ENCODE measurements at regions of chr12 and their contacts with region 1.

Region 1: DNA sequence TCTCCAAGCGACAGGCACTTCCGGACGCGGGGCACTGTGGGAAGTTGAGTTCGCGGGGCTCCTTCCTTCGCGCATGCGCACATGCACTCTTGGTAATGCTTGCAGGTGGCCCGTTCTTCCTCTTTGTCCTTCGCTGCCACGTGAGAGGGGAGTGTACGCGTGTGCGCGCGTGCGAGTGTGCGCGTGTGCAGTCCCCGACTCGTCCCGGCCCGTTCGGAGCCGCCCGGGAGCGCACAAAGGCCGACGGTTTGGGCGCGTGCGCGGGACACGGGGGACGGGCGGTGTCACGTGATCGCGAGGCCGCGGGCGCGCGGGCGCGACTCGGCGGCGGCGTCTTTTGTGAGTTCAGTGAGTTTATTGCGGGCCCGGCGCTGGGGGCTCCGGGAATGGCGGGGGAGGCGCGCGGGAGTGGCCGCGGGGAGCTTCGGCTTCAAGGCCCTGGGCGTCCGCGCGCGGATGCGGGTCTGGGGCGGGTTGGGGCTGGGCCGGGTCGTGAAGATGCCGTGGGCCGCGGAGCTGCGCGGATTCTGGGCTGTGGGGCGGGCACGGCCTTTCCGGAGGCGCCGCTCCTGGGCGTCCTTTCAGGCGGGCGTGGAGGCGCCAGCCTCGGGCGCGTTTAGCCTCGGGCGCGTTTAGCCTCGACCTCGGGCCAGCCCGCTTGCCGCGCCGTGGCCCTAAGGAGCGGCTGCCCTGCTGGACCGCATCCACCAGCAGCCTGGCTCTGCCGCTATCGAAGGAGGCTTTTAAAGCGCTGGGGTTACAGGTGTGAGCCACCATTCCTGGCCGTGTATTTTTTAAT is at the start of gene ZNF84:
- DNase-seq: peak; percentile 98
- H3K4me3 Mint-ChIP-seq: peak within 1 kb of the TSS; percentile 93
- H3K27ac Mint-ChIP-seq: peak within 1 kb of the TSS; percentile 93
- H3K4me1 Mint-ChIP-seq: peaks cover 7% of the 10 kb centered on the region
- H3K27me3 Mint-ChIP-seq: no peaks in the 10 kb centered on the region
- total RNA-seq, gene ZNF84: 10.1 to 11.8 TPM

Region 2: DNA sequence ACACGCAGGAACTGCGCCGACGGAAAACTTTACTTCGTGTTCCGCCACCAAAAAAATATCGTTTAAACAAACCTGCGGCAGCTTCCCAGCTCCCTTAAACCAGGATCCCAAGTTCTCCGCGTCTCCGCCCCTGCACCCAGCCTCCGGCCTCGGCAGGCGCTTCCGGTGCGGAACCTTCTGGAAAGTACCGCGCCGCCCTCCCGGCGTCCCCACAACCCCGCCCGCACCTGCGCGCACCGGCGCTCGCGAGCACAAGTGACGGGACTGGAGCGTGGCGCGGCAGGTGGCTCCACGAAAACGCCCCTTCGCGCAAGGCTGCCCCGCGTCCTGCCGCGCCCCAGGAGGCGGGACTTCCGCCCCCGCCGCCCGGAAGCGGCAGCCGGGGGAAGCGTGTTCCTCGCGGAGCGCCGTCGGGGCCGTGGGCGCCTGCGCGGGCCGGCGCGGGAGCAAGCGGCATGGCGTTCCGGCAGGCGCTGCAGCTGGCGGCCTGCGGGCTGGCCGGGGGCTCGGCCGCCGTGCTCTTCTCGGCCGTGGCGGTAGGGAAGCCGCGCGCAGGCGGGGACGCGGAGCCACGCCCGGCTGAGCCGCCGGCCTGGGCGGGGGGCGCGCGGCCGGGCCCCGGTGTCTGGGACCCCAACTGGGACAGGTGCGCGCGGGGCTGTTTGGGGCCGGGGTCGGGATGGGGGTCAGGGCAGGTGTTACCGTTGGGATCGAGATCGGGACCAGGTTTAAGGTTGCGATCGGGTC is 326.8 kb before region 1 on chr12 and contains the start of gene PGAM5:
- CTCF ChIA-PET with region 1: no interaction called
- POLR2A ChIA-PET with region 1: no interaction called
- intact Hi-C with region 1: loop called (anchors 2 kb)
- DNase-seq: peak; percentile 93
- H3K4me3 Mint-ChIP-seq: peak within 1 kb of the TSS; percentile 83
- H3K27ac Mint-ChIP-seq: peak within 1 kb of the TSS; percentile 86
- H3K4me1 Mint-ChIP-seq: peaks cover 23% of the 10 kb centered on the region
- H3K27me3 Mint-ChIP-seq: no peaks in the 10 kb centered on the region
- total RNA-seq, gene PGAM5: 54.3 to 56.4 TPM

Region 3: GRCh38 chr12:132828706-132829534 is 208.5 kb before region 1 on chr12 and contains the start of gene GOLGA3:
- CTCF ChIA-PET with region 1: no interaction called
- POLR2A ChIA-PET with region 1: no interaction called
- intact Hi-C with region 1: loop called (anchors 1 kb)
- DNase-seq: peak; percentile 96
- H3K4me3 Mint-ChIP-seq: peak within 1 kb of the TSS; percentile 96
- H3K27ac Mint-ChIP-seq: peak within 1 kb of the TSS; percentile 100
- H3K4me1 Mint-ChIP-seq: peaks cover 50% of the 10 kb centered on the region
- H3K27me3 Mint-ChIP-seq: no peaks in the 10 kb centered on the region
- total RNA-seq, gene GOLGA3: 41.7 to 44.2 TPM

Region 4: DNA sequence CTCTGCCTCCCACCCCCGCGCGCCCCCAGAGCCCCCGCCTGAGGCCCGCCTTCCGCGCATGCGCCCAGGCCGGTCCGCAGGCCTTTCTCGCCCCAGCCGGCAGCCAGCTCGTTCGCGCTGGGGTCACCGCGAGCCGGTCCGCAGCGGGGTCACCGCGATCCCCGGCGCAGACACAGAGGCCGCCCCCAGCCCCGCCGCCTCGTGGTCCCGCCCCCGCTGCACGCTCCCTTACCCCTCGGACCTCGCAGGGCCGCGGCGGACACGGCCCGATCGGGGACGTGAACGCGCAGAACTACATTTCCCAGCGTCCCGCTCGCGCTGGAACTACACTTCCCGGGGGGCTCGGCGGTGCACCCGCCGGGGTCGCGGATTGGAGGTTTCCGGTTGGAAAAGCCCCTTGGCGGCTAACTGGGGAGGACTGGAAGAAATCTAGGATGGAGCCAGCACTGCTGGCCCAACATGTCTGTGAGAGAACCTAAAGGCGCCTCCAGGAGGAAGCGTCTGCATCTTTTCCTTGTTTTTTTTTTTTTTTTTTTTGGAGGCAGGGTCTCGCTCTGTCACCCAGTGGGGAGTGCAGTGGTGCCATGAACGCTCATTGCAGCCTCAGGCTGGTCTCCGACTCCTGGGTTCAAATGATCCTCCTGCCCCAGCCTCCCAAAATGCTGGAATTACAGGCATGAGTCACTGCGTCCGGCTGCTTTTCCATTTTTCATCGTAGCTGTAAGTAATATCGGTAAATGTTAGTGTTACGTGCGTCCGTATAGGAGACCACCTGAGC is 81.2 kb before region 1 on chr12 and contains the start of gene ZNF605:
- CTCF ChIA-PET with region 1: no interaction called
- POLR2A ChIA-PET with region 1: no interaction called
- intact Hi-C with region 1: loop called (anchors 1 kb)
- DNase-seq: peak; percentile 93
- H3K4me3 Mint-ChIP-seq: peak within 1 kb of the TSS; percentile 88
- H3K27ac Mint-ChIP-seq: peak within 1 kb of the TSS; percentile 89
- H3K4me1 Mint-ChIP-seq: peaks cover 31% of the 10 kb centered on the region
- H3K27me3 Mint-ChIP-seq: no peaks in the 10 kb centered on the region
- total RNA-seq, gene ZNF605: 4.6 to 5.3 TPM

Region 5: DNA sequence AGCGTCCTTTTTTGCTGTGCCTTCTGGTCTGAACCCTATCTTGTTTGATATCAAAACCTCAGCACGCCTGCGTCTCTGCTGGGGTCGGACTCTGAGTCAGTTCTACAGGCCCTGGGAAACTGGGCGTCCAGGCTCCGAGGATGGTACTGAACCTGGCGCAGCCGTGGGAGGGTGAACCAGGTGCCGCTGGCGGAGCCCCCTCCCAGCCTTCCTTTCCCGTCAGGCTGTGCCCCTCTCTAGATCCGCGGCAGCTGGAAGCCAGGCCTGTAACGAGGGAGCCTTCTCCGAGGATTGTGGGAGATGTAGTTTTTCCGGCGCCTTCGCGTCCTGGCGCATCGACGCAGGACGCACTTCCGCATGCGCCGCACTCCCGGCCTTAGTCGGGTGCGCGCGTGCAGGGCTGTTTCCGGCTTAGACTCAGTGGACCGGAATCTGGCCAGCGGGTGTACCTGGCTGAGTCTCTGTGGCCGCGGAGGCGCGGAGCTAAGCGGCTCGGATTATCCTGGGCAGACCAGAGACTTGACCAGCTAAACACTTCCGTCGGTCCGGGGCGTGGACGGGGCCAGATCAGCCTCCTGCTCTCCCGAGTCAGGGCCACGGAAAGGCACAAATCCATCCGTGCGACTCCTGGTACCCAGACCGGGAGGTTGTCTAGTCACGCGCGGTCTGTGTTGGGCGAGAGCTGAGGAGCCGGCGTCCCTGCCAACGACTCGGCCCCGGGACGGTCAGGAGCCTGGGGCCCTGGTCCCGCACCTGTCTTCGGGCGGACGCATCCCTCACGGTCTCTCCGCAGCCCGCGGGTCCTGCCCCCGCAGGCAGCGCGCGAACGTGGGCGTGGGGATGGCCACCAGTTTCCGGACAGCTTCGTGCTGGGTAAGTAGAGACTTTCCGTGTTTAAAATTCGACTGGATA is 51.1 kb before region 1 on chr12 and contains the start of gene ZNF26:
- CTCF ChIA-PET with region 1: no interaction called
- POLR2A ChIA-PET with region 1: interaction called, 4 read pairs
- intact Hi-C with region 1: loop called (anchors 1 kb)
- DNase-seq: peak; percentile 92
- H3K4me3 Mint-ChIP-seq: peak within 1 kb of the TSS; percentile 89
- H3K27ac Mint-ChIP-seq: peak within 1 kb of the TSS; percentile 94
- H3K4me1 Mint-ChIP-seq: peaks cover 27% of the 10 kb centered on the region
- H3K27me3 Mint-ChIP-seq: no peaks in the 10 kb centered on the region
- total RNA-seq, gene ZNF26: 10.2 to 10.8 TPM

Region 6: GRCh38 chr12:133130038-133130807 is 92.8 kb after region 1 on chr12 and contains the starts of genes ZNF10 and ZNF891:
- CTCF ChIA-PET with region 1: no interaction called
- POLR2A ChIA-PET with region 1: interaction called, 4 read pairs
- intact Hi-C with region 1: loop called (anchors 1 kb)
- DNase-seq: peak; percentile 98
- H3K4me3 Mint-ChIP-seq: peak within 1 kb of the TSS; percentile 97
- H3K27ac Mint-ChIP-seq: peak within 1 kb of the TSS; percentile 96
- H3K4me1 Mint-ChIP-seq: peaks cover 14% of the 10 kb centered on the region
- H3K27me3 Mint-ChIP-seq: no peaks in the 10 kb centered on the region
- total RNA-seq, gene ZNF10: 3.7 to 4.1 TPM
- total RNA-seq, gene ZNF891: 1.1 to 1.2 TPM

Region 7: DNA sequence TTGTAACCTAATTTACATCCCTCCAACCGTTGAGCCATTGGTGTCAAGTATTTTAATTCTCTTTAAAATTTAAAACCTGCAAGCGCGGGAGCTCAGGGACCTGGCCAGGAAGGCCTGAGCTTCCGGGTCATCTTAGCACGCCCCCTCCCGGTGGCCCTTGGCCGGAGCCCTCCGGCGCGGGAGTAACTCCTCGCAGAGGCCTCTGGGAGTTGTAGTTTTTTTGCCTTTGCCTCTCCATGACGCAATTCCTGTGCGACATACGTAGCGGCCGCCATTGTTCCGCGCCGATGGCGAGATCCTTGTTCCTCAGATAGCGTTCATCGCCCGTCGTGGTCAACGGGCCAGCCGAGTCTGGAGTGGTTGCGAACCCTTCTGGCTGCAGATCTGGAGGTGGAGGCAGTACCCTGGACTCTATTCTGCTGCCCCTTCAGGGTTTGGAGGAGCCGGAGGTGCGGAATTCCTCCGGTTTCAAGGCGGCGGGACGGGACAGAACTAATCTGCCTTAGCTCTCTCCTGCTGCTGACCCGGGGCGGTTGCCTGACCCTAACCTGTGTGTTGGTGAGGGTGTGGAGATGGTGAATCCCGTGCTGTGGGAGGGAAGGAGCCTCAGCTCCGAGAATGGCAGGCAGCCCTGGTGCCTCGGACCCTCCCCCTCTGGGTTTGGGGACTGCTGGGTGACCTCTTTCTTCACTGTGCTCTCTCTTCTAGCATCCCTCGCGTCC is 144.0 kb after region 1 on chr12 and contains the start of gene ZNF268:
- CTCF ChIA-PET with region 1: interaction called, 3 read pairs
- POLR2A ChIA-PET with region 1: no interaction called
- intact Hi-C with region 1: loop called (anchors 1 kb)
- DNase-seq: peak; percentile 94
- H3K4me3 Mint-ChIP-seq: peak within 1 kb of the TSS; percentile 95
- H3K27ac Mint-ChIP-seq: peak within 1 kb of the TSS; percentile 80
- H3K4me1 Mint-ChIP-seq: peaks cover 12% of the 10 kb centered on the region
- H3K27me3 Mint-ChIP-seq: no peaks in the 10 kb centered on the region
- total RNA-seq, gene ZNF268: 9.2 to 11.8 TPM

Region 8: DNA sequence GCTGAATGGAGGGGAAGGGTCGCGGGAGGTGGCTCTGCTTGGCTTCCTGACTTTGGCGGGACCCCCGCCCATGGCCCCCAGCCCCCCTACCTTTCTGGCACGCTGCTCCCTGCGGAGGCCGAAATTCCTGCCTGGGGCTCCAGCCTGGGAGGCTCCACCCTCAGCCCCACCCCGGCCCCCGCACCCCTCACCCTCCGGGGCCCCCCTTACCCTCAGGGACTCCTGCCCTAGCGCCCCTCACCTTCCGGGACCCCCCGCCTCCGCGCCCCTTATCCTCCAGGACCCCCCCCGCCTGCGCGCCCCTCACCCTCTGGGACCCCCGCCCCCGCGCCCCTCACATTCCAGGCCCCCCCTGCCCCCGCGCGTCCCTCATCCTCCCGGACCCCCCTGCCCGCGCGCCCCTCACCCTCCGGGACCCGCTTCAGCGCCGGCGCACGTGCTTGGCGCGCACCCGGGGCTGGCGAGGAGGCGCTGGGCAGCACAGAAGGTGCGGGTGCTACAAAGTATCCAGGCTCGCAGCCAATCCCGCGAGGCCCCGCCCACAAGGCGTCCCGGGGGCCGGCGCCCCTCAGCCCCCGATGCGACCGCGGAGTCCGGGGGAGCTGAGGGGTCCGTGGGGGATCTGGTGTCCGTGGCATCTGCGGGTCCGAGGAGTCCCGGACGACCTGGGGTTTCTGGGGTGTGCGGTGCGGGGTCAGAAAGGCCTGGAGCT is 198.2 kb after region 1 on chr12 and contains the start of gene ANHX:
- CTCF ChIA-PET with region 1: no interaction called
- POLR2A ChIA-PET with region 1: no interaction called
- intact Hi-C with region 1: no loop called
- DNase-seq: no peak
- H3K4me3 Mint-ChIP-seq: no peak within 1 kb of the TSS
- H3K27ac Mint-ChIP-seq: no peak within 1 kb of the TSS
- H3K4me1 Mint-ChIP-seq: no peaks in the 10 kb centered on the region
- H3K27me3 Mint-ChIP-seq: no peaks in the 10 kb centered on the region
- total RNA-seq, gene ANHX: not detected

Measured in activated CD4-positive, alpha-beta memory T cell treated with anti-CD3 and anti-CD28 coated beads for 36 hours (primary cell).